ENCODE measurements at regions of chr5 and their contacts with region 1.

Region 1: DNA sequence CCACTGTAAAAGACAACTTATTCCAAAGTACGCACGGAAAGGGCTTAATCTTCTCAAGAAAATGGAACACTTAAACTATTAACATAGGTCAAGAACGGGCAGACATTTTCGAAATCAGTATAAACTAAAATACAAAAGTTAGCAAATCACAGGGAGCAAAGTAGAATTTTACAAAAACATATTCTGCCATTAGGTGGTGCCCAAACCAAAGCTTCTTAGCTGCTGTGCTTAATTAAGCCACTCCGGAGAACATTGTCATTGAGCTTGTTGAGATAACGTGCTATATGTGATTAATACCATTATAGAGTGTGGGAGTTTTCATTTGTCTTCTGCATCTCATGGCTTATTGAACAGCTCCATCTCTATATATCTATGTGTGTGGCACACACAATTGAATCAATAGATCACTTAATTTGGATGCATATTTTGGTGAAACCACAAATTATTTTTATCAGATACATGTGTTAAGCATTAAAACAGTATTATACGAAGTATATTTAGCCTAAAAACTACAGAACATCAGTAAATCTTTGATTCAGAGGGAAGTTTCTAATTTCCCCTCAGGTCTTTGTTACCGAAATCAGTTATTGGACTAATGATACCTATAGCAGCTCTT is 23.4 kb downstream of the UBLCP1 start:
- DNase-seq: peak; percentile 69
- ATAC-seq: peak; percentile 67
- H3K4me3 ChIP-seq: no peak overlapping the region
- H3K4me3 Mint-ChIP-seq: no peak overlapping the region
- H3K27ac ChIP-seq: no peak overlapping the region
- H3K27ac Mint-ChIP-seq: no peak overlapping the region
- H3K4me1 ChIP-seq: no peaks in the 10 kb centered on the region
- H3K4me1 Mint-ChIP-seq: no peaks in the 10 kb centered on the region
- H3K27me3 ChIP-seq: no peaks in the 10 kb centered on the region
- H3K27me3 Mint-ChIP-seq: no peaks in the 10 kb centered on the region
- CTCF ChIP-seq: peak; percentile 82

Region 2: DNA sequence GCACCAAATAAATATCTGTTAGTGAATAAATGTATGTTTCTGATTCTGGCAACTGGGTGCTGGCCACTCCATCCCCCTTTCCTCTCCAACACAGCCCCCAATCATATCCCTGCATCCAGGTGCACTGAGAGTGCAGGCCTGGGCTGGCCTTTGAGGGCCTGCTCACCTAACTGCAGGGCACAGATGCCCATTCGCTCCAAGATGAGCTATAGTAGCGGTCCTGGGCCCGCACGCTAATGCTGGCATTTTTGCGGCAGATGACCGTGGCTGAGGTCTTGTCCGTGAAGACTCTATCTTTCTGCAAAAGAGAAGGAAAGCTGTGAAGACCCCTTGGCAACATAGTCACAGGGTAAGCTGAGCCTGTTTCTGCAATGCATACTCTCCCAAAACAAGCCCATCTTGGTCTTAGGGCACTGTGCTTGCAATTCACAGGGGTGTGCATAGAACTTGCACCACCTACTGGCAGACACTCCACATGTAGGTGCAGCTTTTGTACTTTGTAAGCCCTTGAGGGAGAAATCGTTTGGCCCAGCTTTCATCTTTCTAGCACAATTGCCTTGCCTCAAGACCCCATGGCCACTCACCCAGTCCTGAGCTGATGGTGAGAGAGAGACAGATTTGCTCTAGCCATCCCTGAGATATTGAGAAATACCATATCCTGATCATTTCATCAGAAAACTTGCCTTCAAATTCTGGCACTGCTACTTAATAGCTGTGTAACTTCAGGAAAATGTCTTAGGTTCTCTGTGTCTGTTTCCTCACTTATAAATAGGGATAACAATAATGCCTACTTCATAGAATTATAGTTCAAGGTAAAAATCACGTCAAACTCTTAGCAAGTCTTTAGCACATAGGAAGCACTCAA is 30.2 kb after region 1 on chr5:
- CTCF ChIA-PET with region 1: interaction called, 72 read pairs
- POLR2A ChIA-PET with region 1: no interaction called
- intact Hi-C with region 1: loop called (anchors 1 kb)
- DNase-seq: peak; percentile 51
- ATAC-seq: peak; percentile 62
- H3K4me3 ChIP-seq: no peak overlapping the region
- H3K4me3 Mint-ChIP-seq: no peak overlapping the region
- H3K27ac ChIP-seq: no peak overlapping the region
- H3K27ac Mint-ChIP-seq: no peak overlapping the region
- H3K4me1 ChIP-seq: peaks cover 0 to under 1% of the 10 kb centered on the region in 2 donors
- H3K4me1 Mint-ChIP-seq: no peaks in the 10 kb centered on the region
- H3K27me3 ChIP-seq: peaks cover 0 to 6% (median under 1%) of the 10 kb centered on the region in 4 experiments
- H3K27me3 Mint-ChIP-seq: peaks cover 4% of the 10 kb centered on the region
- CTCF ChIP-seq: peak; percentile 52

Region 3: DNA sequence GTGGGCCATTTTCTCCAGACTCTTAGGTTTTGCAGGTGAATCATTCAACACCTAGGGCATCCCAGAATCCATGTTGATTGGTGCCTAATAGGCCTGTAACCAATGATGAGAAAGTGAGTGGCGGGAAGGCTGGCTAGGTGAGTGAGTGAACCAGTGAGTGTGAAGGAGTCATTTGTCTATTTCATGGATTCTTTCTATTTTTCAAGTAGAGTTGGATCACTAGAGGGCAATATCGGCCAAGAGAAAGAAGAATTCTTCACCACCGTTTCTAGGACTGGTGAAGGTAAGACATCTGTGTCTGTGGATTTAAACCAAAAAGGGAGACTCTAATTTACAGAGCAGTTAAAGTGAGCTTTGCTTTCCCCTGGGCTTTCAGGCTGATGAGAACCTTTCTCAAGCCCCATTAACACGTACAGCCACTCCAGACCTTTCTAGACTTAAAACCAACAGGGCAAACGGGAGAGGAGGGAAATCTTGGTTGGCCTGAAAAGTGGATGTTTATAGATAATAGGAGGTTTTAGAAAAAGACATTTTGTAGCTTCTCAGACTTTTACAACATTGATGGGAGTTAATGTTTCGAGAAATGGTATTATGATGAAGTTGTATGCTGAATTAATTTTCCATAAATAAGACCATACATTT is 158.0 kb after region 1 on chr5:
- CTCF ChIA-PET with region 1: interaction called, 13 read pairs
- POLR2A ChIA-PET with region 1: no interaction called
- intact Hi-C with region 1: loop called (anchors 5 kb)
- DNase-seq: peak; percentile 46
- ATAC-seq: no peak
- H3K4me3 ChIP-seq: no peak overlapping the region
- H3K4me3 Mint-ChIP-seq: no peak overlapping the region
- H3K27ac ChIP-seq: no peak overlapping the region
- H3K27ac Mint-ChIP-seq: peak overlapping the region; percentile 42
- H3K4me1 ChIP-seq: peaks cover 0 to 7% of the 10 kb centered on the region in 2 donors
- H3K4me1 Mint-ChIP-seq: peaks cover 8% of the 10 kb centered on the region
- H3K27me3 ChIP-seq: no peaks in the 10 kb centered on the region
- H3K27me3 Mint-ChIP-seq: no peaks in the 10 kb centered on the region
- CTCF ChIP-seq: peak; percentile 28

Region 4: DNA sequence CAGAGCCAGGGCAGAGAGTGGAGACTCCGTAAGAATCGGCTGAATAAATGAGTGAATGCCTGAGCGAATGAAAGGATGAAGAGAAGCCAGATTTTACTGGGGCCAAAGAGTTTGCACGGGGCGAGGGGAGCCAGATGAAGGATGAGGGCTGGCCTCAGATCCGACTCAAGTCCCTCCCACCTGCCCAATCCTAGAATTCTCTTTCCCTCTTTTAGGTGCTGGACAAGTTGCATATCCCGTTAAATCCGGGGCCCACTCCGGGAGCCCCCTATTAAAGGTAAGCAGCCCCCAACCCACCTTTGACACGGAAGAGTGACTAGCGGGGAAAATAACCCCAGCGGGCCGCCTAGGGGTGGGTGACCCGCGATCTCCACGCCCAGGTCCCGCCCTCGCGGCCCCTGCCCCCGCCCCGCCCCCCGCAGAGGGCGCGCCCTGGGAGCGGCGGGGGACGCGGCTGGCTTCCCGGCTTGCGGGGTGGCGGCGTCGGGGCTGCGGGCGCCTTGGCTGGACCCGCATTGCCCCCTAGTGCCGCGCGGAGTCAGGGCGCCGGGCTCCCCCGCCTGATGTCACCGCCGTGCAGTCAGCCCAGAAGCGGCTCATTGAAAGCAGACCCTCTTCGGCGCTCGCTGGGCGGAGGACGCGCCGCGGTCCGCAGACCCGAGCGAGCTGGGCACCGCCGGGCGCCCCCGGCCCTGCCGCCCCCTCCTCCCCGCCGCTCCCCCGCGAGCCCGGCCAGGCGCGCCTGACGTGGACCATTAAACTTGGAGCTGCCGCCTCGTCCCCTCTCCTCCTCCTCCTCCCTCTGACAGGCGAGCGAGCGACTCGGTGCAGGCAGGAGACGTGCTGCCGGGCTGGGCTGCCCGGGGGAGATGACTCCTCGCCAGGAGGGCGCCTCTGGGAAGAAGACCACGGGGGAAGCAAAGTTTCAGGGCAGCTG is 629.6 kb after region 1 on chr5 and contains the start of gene ADRA1B:
- CTCF ChIA-PET with region 1: interaction called, 60 read pairs
- POLR2A ChIA-PET with region 1: no interaction called
- intact Hi-C with region 1: loop called (anchors 1 kb)
- DNase-seq: peak; percentile 65
- ATAC-seq: peak; percentile 90
- H3K4me3 ChIP-seq: peak within 1 kb of the TSS in 2 of 5 experiments; percentile 29 to 48
- H3K4me3 Mint-ChIP-seq: peak within 1 kb of the TSS; percentile 80
- H3K27ac ChIP-seq: no peak within 1 kb of the TSS
- H3K27ac Mint-ChIP-seq: no peak within 1 kb of the TSS
- H3K4me1 ChIP-seq: peaks cover 10 to 15% of the 10 kb centered on the region in 2 donors
- H3K4me1 Mint-ChIP-seq: peaks cover 16% of the 10 kb centered on the region
- H3K27me3 ChIP-seq: peaks cover 0 to 43% (median 19%) of the 10 kb centered on the region in 4 experiments
- H3K27me3 Mint-ChIP-seq: peaks cover 51% of the 10 kb centered on the region
- CTCF ChIP-seq: peak; percentile 66
- total RNA-seq, gene ADRA1B: not detected in 2 replicates

Region 5: GRCh38 chr5:159965031-159965837 is 678.7 kb after region 1 on chr5:
- CTCF ChIA-PET with region 1: interaction called, 11 read pairs
- POLR2A ChIA-PET with region 1: no interaction called
- intact Hi-C with region 1: loop called (anchors 1 kb)
- DNase-seq: peak; percentile 32
- ATAC-seq: peak; percentile 49
- H3K4me3 ChIP-seq: no peak overlapping the region
- H3K4me3 Mint-ChIP-seq: no peak overlapping the region
- H3K27ac ChIP-seq: no peak overlapping the region
- H3K27ac Mint-ChIP-seq: no peak overlapping the region
- H3K4me1 ChIP-seq: peaks cover 0 to 3% of the 10 kb centered on the region in 2 donors
- H3K4me1 Mint-ChIP-seq: no peaks in the 10 kb centered on the region
- H3K27me3 ChIP-seq: peaks cover 0 to 22% (median 14%) of the 10 kb centered on the region in 4 experiments
- H3K27me3 Mint-ChIP-seq: peaks cover 42% of the 10 kb centered on the region
- CTCF ChIP-seq: peak; percentile 50

Region 6: DNA sequence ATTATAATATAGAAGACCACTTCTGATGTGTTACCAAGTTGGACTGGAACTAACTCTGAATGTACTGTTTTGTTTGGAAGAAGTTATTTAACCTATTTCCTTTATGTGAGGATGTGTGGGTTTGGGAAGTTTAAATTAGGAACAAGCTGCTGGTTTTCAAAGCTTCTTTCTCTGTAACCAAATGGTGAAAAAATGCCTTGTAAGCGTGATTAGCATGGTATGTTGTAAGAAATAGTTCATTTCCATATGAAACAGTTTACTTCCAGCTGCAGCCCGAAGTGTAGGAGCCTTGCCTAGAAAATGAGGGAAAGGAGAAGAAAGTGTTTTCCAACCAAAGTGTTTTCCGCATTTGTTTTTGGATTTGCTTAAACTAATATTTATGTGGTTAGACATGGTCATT is 758.4 kb after region 1 on chr5:
- CTCF ChIA-PET with region 1: no interaction called
- POLR2A ChIA-PET with region 1: no interaction called
- intact Hi-C with region 1: no loop called
- DNase-seq: no peak
- ATAC-seq: no peak
- H3K4me3 ChIP-seq: no peak overlapping the region
- H3K4me3 Mint-ChIP-seq: no peak overlapping the region
- H3K27ac ChIP-seq: no peak overlapping the region
- H3K27ac Mint-ChIP-seq: no peak overlapping the region
- H3K4me1 ChIP-seq: no peaks in the 10 kb centered on the region
- H3K4me1 Mint-ChIP-seq: no peaks in the 10 kb centered on the region
- H3K27me3 ChIP-seq: no peaks in the 10 kb centered on the region
- H3K27me3 Mint-ChIP-seq: no peaks in the 10 kb centered on the region
- CTCF ChIP-seq: no peak

Measured in B cell (primary cell).